CD4-positive, alpha-beta memory T cell (primary cell): ENCODE measurements at regions of chr12 and their contacts with region 1.

Region 1: GRCh38 chr12:67482751-67483671 is 165.5 kb upstream of the DYRK2 start:
- DNase-seq: peak; percentile 77 to 86 (median 85)
- H3K4me3 ChIP-seq: no peak overlapping the region
- H3K4me3 Mint-ChIP-seq: peak overlapping the region in 7 of 8 donors; percentile 40 to 83 (median 54)
- H3K27ac ChIP-seq: peak overlapping the region; percentile 36
- H3K27ac Mint-ChIP-seq: peak overlapping the region; percentile 85 to 96 (median 93)
- H3K4me1 ChIP-seq: peaks cover 51% of the 10 kb centered on the region
- H3K4me1 Mint-ChIP-seq: peaks cover 38 to 46% (median 42%) of the 10 kb centered on the region in 4 donors
- H3K27me3 ChIP-seq: no peaks in the 10 kb centered on the region
- H3K27me3 Mint-ChIP-seq: no peaks in the 10 kb centered on the region

Region 2: DNA sequence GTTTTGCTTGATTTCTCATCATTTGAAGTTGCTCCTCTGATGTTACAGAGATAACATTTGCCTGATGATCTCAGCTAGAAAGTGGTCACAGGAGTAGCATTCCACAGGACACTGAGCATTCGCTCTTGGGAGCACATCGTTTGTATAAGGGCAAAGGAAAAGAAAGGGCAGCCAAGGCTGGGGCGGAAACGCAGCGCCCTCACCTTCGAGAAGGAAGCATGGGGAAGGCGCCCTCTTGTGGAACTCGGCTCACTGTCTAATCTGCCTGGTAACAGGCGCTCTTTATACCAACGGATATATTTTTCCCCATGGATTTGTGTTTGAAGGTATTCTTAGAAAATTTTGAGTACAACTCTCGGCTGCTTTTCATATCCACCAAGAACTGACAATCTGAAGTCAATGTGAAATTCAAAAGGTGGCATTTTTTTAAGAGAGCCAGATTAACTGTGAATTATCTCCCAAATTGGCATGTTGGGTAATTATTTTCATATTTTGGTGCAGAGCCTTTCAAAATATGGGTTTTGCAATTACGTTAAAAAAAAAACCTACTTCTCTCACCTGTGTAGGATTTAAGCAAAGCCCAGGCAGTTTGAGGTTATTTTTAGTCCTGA is 41.2 kb before region 1 on chr12:
- CTCF ChIA-PET with region 1: interaction called, 9 read pairs
- POLR2A ChIA-PET with region 1: interaction called, 7 read pairs
- intact Hi-C with region 1: loop called (anchors 1 kb)
- DNase-seq: peak; percentile 68 to 79 (median 68)
- H3K4me3 ChIP-seq: no peak overlapping the region
- H3K4me3 Mint-ChIP-seq: peak overlapping the region; percentile 43 to 72 (median 68)
- H3K27ac ChIP-seq: no peak overlapping the region
- H3K27ac Mint-ChIP-seq: peak overlapping the region in 6 of 7 donors; percentile 10 to 86 (median 82)
- H3K4me1 ChIP-seq: peaks cover 12% of the 10 kb centered on the region
- H3K4me1 Mint-ChIP-seq: peaks cover 21 to 35% (median 27%) of the 10 kb centered on the region in 4 donors
- H3K27me3 ChIP-seq: no peaks in the 10 kb centered on the region
- H3K27me3 Mint-ChIP-seq: no peaks in the 10 kb centered on the region

Region 3: DNA sequence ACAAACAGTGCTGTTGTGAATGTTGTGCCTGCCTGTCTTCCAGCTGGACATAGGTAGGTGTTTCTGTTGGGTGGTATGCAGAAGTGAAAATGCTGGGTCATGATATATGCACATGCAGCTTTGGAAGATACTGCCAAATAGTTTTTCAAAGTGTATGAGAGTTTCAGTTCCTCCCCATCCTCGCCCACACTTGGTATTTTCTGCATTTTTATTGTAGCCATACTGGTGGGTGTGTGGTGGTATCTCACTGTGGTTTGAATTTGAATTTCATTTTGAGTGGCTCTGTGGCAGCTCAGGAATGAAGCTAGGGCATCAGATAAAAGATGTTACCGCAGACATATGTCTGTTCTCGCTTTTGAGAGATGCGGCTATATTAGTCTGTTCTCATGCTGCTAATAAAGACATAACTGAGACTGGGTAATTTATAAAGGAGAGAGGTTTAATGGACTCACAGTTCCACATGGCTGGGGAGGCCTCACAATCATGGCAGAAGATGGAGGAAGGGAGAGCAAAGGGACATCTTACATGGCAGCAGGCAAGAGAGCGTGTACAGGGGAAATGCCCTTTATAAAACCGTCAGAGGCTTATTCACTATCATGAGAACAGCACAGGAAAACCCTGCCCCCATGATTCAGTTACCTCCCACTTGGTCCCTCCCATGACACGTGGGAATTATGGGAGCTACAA is 30.7 kb before region 1 on chr12:
- CTCF ChIA-PET with region 1: no interaction called
- POLR2A ChIA-PET with region 1: interaction called, 8 read pairs
- intact Hi-C with region 1: loop called (anchors 2 kb)
- DNase-seq: no peak
- H3K4me3 ChIP-seq: no peak overlapping the region
- H3K4me3 Mint-ChIP-seq: peak overlapping the region in 4 of 8 donors; percentile 21 to 69 (median 66)
- H3K27ac ChIP-seq: no peak overlapping the region
- H3K27ac Mint-ChIP-seq: peak overlapping the region in 5 of 7 donors; percentile 3 to 69 (median 25)
- H3K4me1 ChIP-seq: peaks cover 40% of the 10 kb centered on the region
- H3K4me1 Mint-ChIP-seq: peaks cover 45 to 53% (median 48%) of the 10 kb centered on the region in 4 donors
- H3K27me3 ChIP-seq: no peaks in the 10 kb centered on the region
- H3K27me3 Mint-ChIP-seq: peaks cover 0 to 1% of the 10 kb centered on the region in 2 donors

Region 4: DNA sequence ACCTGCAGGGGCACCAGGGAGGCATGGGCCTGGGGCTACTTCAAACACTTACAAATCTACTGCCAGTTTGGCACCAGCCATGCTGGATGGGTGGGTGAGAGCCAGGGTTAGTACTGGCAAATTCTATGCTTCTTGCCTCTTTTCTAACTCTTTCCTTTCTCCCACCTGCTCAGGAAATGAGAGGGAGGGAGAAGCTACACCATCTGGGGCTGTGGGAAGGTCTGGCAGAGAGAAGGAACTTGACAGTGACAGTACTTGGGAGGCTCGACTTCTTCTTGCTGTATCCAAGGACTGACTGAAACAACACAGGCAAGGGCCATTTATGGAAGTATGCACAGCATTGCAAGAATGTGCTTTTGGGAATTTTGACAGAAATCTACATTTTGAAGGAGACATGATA is 16.0 kb after region 1 on chr12:
- CTCF ChIA-PET with region 1: interaction called, 5 read pairs
- POLR2A ChIA-PET with region 1: interaction called, 17 read pairs
- intact Hi-C with region 1: no loop called
- DNase-seq: no peak
- H3K4me3 ChIP-seq: no peak overlapping the region
- H3K4me3 Mint-ChIP-seq: no peak overlapping the region
- H3K27ac ChIP-seq: no peak overlapping the region
- H3K27ac Mint-ChIP-seq: no peak overlapping the region
- H3K4me1 ChIP-seq: peaks cover 8% of the 10 kb centered on the region
- H3K4me1 Mint-ChIP-seq: peaks cover 16 to 25% (median 23%) of the 10 kb centered on the region in 4 donors
- H3K27me3 ChIP-seq: no peaks in the 10 kb centered on the region
- H3K27me3 Mint-ChIP-seq: no peaks in the 10 kb centered on the region

Region 5: GRCh38 chr12:67558775-67559174 is 75.8 kb after region 1 on chr12:
- CTCF ChIA-PET with region 1: no interaction called
- POLR2A ChIA-PET with region 1: interaction called, 13 read pairs
- intact Hi-C with region 1: no loop called
- DNase-seq: no peak
- H3K4me3 ChIP-seq: no peak overlapping the region
- H3K4me3 Mint-ChIP-seq: no peak overlapping the region
- H3K27ac ChIP-seq: no peak overlapping the region
- H3K27ac Mint-ChIP-seq: no peak overlapping the region
- H3K4me1 ChIP-seq: peaks cover 22% of the 10 kb centered on the region
- H3K4me1 Mint-ChIP-seq: peaks cover 0 to 18% (median 10%) of the 10 kb centered on the region in 4 donors
- H3K27me3 ChIP-seq: no peaks in the 10 kb centered on the region
- H3K27me3 Mint-ChIP-seq: no peaks in the 10 kb centered on the region

Region 6: GRCh38 chr12:67578976-67579661 is 96.1 kb after region 1 on chr12:
- CTCF ChIA-PET with region 1: interaction called, 5 read pairs
- POLR2A ChIA-PET with region 1: interaction called, 24 read pairs
- intact Hi-C with region 1: loop called (anchors 5 kb)
- DNase-seq: peak; percentile 57 to 75 (median 66)
- H3K4me3 ChIP-seq: peak overlapping the region; percentile 2 to 8
- H3K4me3 Mint-ChIP-seq: peak overlapping the region in 7 of 8 donors; percentile 75 to 89 (median 79)
- H3K27ac ChIP-seq: no peak overlapping the region
- H3K27ac Mint-ChIP-seq: peak overlapping the region; percentile 55 to 89 (median 82)
- H3K4me1 ChIP-seq: peaks cover 49% of the 10 kb centered on the region
- H3K4me1 Mint-ChIP-seq: peaks cover 41 to 65% (median 50%) of the 10 kb centered on the region in 4 donors
- H3K27me3 ChIP-seq: no peaks in the 10 kb centered on the region
- H3K27me3 Mint-ChIP-seq: no peaks in the 10 kb centered on the region

Region 7: DNA sequence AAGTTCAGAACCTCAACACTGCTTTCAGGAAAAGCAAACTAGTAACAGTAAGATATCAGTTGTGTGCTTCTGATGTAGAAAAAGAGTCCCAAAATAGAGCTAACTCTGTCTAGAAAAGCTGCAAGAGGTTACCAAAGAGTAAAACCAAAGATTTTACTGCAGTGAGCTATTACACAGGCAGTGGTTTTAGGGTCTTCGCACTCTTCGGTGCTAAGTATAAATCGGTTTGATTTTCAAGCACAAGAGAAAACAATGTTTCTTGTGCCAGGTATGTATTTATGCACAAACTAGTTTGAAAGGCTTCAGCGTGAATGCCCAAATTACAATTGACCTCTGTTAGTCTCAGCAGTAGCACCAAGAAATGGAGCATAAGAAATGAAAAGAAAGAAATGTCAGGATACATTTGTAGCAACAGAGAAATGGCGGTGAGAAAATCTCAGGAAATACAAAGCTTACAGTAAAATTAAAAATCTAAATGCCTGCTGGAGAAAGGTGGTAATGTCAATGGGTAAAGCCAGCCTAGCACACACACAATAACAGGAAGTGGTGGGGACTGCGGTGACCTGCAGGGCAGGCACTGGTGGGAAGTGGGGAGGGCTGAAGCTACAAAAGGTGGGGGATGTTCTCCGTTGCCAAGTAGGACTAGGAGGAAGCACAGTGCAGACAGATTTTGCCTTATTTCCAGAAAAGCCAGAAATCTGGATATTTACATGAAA is 147.5 kb after region 1 on chr12:
- CTCF ChIA-PET with region 1: interaction called, 10 read pairs
- POLR2A ChIA-PET with region 1: interaction called, 39 read pairs
- intact Hi-C with region 1: loop called (anchors 1 kb)
- DNase-seq: peak; percentile 91 to 96 (median 92)
- H3K4me3 ChIP-seq: no peak overlapping the region
- H3K4me3 Mint-ChIP-seq: peak overlapping the region; percentile 61 to 88 (median 74)
- H3K27ac ChIP-seq: peak overlapping the region; percentile 43
- H3K27ac Mint-ChIP-seq: peak overlapping the region; percentile 87 to 96 (median 91)
- H3K4me1 ChIP-seq: peaks cover 84% of the 10 kb centered on the region
- H3K4me1 Mint-ChIP-seq: peaks cover 67 to 91% (median 82%) of the 10 kb centered on the region in 4 donors
- H3K27me3 ChIP-seq: no peaks in the 10 kb centered on the region
- H3K27me3 Mint-ChIP-seq: no peaks in the 10 kb centered on the region

Region 8: GRCh38 chr12:67740711-67741110 is 257.7 kb after region 1 on chr12:
- CTCF ChIA-PET with region 1: no interaction called
- POLR2A ChIA-PET with region 1: no interaction called
- intact Hi-C with region 1: no loop called
- DNase-seq: no peak
- H3K4me3 ChIP-seq: no peak overlapping the region
- H3K4me3 Mint-ChIP-seq: no peak overlapping the region
- H3K27ac ChIP-seq: no peak overlapping the region
- H3K27ac Mint-ChIP-seq: no peak overlapping the region
- H3K4me1 ChIP-seq: no peaks in the 10 kb centered on the region
- H3K4me1 Mint-ChIP-seq: no peaks in the 10 kb centered on the region
- H3K27me3 ChIP-seq: no peaks in the 10 kb centered on the region
- H3K27me3 Mint-ChIP-seq: no peaks in the 10 kb centered on the region

Region 9: DNA sequence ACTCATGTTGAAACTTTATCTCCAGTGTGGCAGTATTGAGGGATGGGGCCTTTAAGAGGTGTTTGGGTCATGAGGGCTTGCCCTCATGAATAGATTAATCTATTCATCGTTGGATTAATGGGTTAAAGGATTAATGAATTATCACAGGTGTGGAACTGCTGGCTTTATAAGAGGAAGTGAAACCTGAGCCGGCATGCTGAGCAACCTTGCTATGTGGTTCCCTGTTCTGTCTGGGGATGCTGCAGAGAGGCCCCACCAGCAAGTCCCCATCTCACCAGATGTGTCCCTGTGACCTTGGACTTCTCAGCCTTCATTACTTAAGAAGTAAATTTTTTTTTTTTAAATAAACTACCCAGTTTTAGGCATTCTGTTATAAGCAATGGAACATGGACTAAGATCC is 275.1 kb after region 1 on chr12:
- CTCF ChIA-PET with region 1: no interaction called
- POLR2A ChIA-PET with region 1: no interaction called
- intact Hi-C with region 1: no loop called
- DNase-seq: no peak
- H3K4me3 ChIP-seq: no peak overlapping the region
- H3K4me3 Mint-ChIP-seq: no peak overlapping the region
- H3K27ac ChIP-seq: no peak overlapping the region
- H3K27ac Mint-ChIP-seq: no peak overlapping the region
- H3K4me1 ChIP-seq: no peaks in the 10 kb centered on the region
- H3K4me1 Mint-ChIP-seq: peaks cover 0 to 5% (median 2%) of the 10 kb centered on the region in 4 donors
- H3K27me3 ChIP-seq: no peaks in the 10 kb centered on the region
- H3K27me3 Mint-ChIP-seq: peaks cover 1 to 2% of the 10 kb centered on the region in 2 donors

Region 10: GRCh38 chr12:68317047-68317667 is 834.1 kb after region 1 on chr12:
- CTCF ChIA-PET with region 1: no interaction called
- POLR2A ChIA-PET with region 1: no interaction called
- intact Hi-C with region 1: no loop called
- DNase-seq: peak in 4 of 5 donors; percentile 48 to 58 (median 54)
- H3K4me3 ChIP-seq: no peak overlapping the region
- H3K4me3 Mint-ChIP-seq: no peak overlapping the region
- H3K27ac ChIP-seq: no peak overlapping the region
- H3K27ac Mint-ChIP-seq: no peak overlapping the region
- H3K4me1 ChIP-seq: no peaks in the 10 kb centered on the region
- H3K4me1 Mint-ChIP-seq: peaks cover 0 to 2% (median 0%) of the 10 kb centered on the region in 4 donors
- H3K27me3 ChIP-seq: no peaks in the 10 kb centered on the region
- H3K27me3 Mint-ChIP-seq: no peaks in the 10 kb centered on the region